ENCODE measurements at regions of chr1 and their contacts with region 1.

Region 1: GRCh38 chr1:15788624-15789301 is 18.7 kb downstream of the UQCRHL start:
- DNase-seq: peak; percentile 53
- H3K4me3 ChIP-seq: no peak overlapping the region
- H3K27ac ChIP-seq: no peak overlapping the region
- H3K4me1 ChIP-seq: no peaks in the 10 kb centered on the region
- H3K27me3 ChIP-seq: no peaks in the 10 kb centered on the region
- CTCF ChIP-seq: no peak
- POLR2A ChIP-seq: no peak

Region 2: DNA sequence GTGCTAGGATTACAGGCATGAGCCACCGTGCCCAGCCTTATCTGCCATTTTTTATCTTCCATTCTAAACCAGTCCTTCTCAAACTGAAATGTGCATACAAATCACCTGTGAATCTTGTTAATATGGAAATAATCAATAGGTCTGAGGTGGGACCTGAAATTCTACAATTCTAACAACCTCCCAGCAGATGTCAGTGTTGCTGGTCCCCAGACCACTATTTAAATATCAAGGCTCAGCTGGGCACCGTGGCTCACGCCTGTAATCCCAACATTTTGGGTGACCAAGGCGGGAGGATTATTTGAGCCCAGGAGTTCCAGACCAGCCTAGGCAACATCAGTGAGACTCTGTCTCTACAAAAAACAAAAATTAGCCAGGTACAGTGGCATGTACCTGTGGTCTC is 14.6 kb after region 1 on chr1:
- CTCF ChIA-PET with region 1: interaction called, 15 read pairs
- POLR2A ChIA-PET with region 1: no interaction called
- dilution Hi-C with region 1: no loop called
- intact Hi-C with region 1: no loop called
- DNase-seq: peak; percentile 45
- H3K4me3 ChIP-seq: no peak overlapping the region
- H3K27ac ChIP-seq: no peak overlapping the region
- H3K4me1 ChIP-seq: peaks cover 25% of the 10 kb centered on the region
- H3K27me3 ChIP-seq: no peaks in the 10 kb centered on the region
- CTCF ChIP-seq: peak in 1 of 2 donors; percentile 40
- POLR2A ChIP-seq: no peak

Region 3: DNA sequence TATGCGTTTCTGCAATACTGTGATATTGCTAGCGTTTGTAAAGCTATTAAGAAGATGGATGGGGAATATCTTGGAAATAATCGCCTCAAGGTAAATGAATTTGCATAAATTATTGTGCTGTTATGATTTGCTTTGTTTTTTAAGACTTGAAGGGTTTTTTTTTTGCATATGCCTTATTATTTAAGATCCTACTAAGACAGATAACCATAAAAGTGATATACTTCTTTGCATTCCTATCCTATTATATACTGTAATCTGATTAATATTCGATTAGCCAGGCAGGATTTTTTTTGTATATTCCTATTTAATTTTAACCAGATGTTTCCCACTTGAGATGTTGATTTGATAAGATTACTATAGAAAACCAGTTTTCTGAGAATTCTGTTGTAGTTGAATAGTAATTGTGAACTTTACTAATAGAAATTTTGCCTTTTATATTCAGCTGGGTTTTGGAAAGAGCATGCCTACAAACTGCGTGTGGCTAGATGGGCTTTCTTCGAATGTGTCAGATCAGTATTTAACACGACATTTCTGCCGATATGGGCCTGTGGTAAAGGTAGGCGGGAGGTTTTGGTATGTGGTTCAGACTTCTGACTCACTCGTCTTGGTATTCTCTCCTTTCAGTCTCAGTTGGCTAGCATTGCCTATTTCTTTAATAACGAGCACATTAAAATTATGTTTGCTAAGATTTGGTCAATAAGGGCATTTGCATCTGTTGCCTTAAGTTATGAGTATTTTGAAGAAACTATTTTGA is 130.4 kb after region 1 on chr1:
- CTCF ChIA-PET with region 1: interaction called, 11 read pairs
- POLR2A ChIA-PET with region 1: no interaction called
- dilution Hi-C with region 1: no loop called
- intact Hi-C with region 1: no loop called
- DNase-seq: no peak
- H3K4me3 ChIP-seq: no peak overlapping the region
- H3K27ac ChIP-seq: no peak overlapping the region
- H3K4me1 ChIP-seq: peaks cover 5% of the 10 kb centered on the region
- H3K27me3 ChIP-seq: no peaks in the 10 kb centered on the region
- CTCF ChIP-seq: no peak
- POLR2A ChIP-seq: no peak

Region 4: GRCh38 chr1:15957228-15958095 is 168.7 kb after region 1 on chr1:
- CTCF ChIA-PET with region 1: interaction called, 14 read pairs
- POLR2A ChIA-PET with region 1: no interaction called
- dilution Hi-C with region 1: no loop called
- intact Hi-C with region 1: no loop called
- DNase-seq: no peak
- H3K4me3 ChIP-seq: no peak overlapping the region
- H3K27ac ChIP-seq: peak overlapping the region; percentile 48
- H3K4me1 ChIP-seq: peaks cover 49% of the 10 kb centered on the region
- H3K27me3 ChIP-seq: no peaks in the 10 kb centered on the region
- CTCF ChIP-seq: peak in 1 of 2 donors; percentile 38
- POLR2A ChIP-seq: no peak

Region 5: GRCh38 chr1:16009030-16009709 is 220.4 kb after region 1 on chr1:
- CTCF ChIA-PET with region 1: interaction called, 10 read pairs
- POLR2A ChIA-PET with region 1: no interaction called
- dilution Hi-C with region 1: no loop called
- intact Hi-C with region 1: no loop called
- DNase-seq: peak; percentile 73
- H3K4me3 ChIP-seq: no peak overlapping the region
- H3K27ac ChIP-seq: no peak overlapping the region
- H3K4me1 ChIP-seq: peaks cover 4% of the 10 kb centered on the region
- H3K27me3 ChIP-seq: no peaks in the 10 kb centered on the region
- CTCF ChIP-seq: peak; percentile 95 to 97
- POLR2A ChIP-seq: no peak

Region 6: DNA sequence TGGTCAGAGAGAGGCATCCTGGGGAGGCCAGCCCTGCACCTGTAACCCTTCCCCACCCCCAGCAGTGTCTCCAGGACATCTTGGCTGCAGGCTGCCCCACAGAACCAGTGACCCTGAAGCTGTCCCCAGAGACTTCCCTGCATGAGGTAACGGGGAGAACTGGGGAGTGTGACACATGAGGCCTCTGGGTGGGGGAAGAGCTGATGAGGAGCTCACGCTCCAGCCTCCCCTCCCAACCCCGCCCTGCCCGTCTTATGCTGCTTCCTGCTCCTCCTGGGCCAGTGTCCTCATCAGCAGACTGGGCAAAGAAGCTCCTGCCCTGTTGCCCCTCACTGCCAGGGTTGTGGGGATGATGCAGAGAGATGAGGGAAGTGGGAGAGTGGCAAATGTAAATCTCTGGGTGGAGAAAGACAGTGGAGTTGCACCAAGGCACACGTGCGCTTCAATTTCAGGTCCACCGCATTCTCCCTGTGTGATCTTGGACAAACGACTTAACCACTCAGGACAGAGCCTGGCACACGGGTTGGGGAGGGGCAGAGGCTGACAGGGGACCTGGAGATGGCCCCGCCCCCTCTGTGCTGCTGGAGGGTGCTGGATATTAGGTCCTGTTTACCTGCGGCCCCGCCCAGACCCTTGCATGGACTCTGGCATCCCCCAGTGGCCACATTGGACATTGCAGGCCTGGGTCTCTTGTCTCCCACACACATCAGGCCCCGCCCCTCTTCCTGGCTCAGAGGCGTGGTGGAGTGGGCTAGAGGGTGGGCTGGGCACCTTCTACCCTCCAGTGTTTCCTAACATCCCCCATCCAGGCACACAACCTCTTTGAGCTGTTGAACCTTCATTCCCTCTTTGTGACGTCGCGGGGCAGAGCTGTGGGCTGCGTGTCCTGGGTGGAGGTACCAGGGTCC is 267.1 kb after region 1 on chr1:
- CTCF ChIA-PET with region 1: interaction called, 17 read pairs
- POLR2A ChIA-PET with region 1: no interaction called
- dilution Hi-C with region 1: no loop called
- intact Hi-C with region 1: loop called (anchors 2 kb)
- DNase-seq: peak; percentile 78
- H3K4me3 ChIP-seq: no peak overlapping the region
- H3K27ac ChIP-seq: no peak overlapping the region
- H3K4me1 ChIP-seq: no peaks in the 10 kb centered on the region
- H3K27me3 ChIP-seq: peaks cover 0 to 4% of the 10 kb centered on the region in 2 experiments
- CTCF ChIP-seq: peak; percentile 77 to 95
- POLR2A ChIP-seq: no peak

Region 7: DNA sequence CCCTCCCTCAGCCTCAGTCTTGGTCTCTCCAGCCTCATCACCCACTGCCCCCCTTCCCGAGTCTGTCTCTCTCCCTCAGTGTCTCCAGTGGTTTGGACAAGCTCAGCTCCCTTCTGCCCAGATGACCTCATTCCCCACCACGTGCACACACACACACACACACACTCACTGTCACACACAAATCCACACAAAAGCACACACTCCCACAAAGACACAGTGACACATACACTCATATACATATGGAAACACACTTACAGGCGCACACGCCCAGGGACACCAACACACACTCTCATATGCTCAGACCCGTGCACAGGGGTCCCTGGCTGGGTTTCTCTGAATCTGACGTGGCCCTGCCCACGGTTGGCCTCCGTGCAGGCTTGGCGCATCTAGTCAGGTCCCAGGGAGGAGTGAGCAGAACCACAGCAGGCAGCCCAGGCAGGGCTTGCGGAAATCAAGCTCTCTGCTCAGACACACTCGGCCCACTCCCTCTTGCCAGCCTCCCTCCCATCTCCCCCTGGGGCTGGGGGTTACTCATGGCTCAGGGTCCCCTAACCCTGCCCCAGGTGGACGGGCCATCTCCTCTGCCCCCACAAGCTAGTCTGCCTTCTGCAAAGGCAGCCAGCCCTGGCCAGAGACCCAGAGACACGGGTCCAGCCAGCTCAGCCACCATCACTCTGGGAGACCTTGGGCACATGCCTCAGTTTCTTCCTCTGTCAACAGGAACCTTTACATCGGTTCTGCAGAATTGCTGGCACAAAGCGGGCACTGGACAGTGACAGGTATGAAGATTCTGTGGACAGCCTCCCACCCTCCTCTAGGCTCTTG is 323.2 kb after region 1 on chr1:
- CTCF ChIA-PET with region 1: no interaction called
- POLR2A ChIA-PET with region 1: no interaction called
- dilution Hi-C with region 1: no loop called
- intact Hi-C with region 1: no loop called
- DNase-seq: no peak
- H3K4me3 ChIP-seq: no peak overlapping the region
- H3K27ac ChIP-seq: no peak overlapping the region
- H3K4me1 ChIP-seq: peaks cover 3% of the 10 kb centered on the region
- H3K27me3 ChIP-seq: no peaks in the 10 kb centered on the region
- CTCF ChIP-seq: no peak
- POLR2A ChIP-seq: no peak

Measured in endothelial cell of umbilical vein (primary cell).